PC-3 (cell line): ENCODE measurements at regions of chr6 and their contacts with region 1.

Region 1: GRCh38 chr6:109073344-109074132 is 21.1 kb downstream of the SESN1 start:
- DNase-seq: peak; percentile 74
- ATAC-seq: no peak; the same call in 1 of the 2 replicates
- H3K4me3 ChIP-seq: no peak overlapping the region
- H3K27ac ChIP-seq: no peak overlapping the region
- H3K4me1 ChIP-seq: 0 out of 2 replicates have a peak, but pooled peaks cover 4% of the 10 kb centered on the region
- H3K27me3 ChIP-seq: no peaks in the 10 kb centered on the region
- CTCF ChIP-seq: peak; percentile 72

Region 2: GRCh38 chr6:108541838-108542759 is 531.4 kb before region 1 on chr6:
- CTCF ChIA-PET with region 1: interaction called, 3 read pairs
- POLR2A ChIA-PET with region 1: no interaction called
- intact Hi-C with region 1: loop called (anchors 2 kb)
- DNase-seq: peak; percentile 76
- ATAC-seq: peak; percentile 71
- H3K4me3 ChIP-seq: peak overlapping the region; percentile 40; the same call in 1 of the 2 replicates
- H3K27ac ChIP-seq: no peak overlapping the region
- H3K4me1 ChIP-seq: 0 out of 2 replicates have a peak, but pooled peaks cover 4% of the 10 kb centered on the region
- H3K27me3 ChIP-seq: no peaks in the 10 kb centered on the region
- CTCF ChIP-seq: peak; percentile 85

Region 3: DNA sequence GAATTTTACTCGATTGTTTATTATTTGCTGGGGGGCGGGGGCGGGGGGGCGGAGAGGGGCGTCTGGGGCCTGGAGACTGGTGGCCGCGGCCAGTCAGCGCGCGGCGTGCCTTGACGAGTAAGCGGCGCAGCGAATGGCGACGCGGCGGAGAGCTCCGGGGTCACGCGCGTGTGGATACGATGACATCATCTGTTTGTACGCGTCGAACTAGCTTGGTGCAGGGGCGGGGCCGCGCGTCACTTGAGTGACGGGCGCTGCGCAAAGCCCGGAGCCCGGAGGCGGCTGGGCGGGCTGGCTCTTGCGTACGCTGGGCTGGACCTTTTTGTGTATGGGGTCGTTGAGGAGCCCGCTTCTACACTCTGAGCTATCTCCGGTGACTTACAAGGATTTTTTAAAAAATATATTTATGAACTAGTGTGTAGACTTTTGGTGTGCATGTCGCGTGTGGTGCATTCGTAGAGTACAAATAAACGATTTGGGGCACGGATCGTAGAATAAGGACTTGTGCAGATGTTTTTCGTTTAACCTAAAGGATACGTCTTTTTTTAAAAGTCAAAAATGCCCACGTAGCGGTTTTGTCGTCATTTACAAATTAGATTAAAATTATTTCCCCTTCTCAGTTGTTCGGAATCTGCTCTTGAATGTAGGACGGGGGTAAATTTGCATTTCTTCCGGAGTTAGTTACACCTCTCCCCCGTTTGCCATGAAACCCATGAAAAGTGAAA is 515.0 kb before region 1 on chr6:
- CTCF ChIA-PET with region 1: no interaction called
- POLR2A ChIA-PET with region 1: interaction called, 10 read pairs
- intact Hi-C with region 1: loop called (anchors 5 kb)
- DNase-seq: peak; percentile 96
- ATAC-seq: peak; percentile 41
- H3K4me3 ChIP-seq: peak overlapping the region; percentile 95
- H3K27ac ChIP-seq: peak overlapping the region; percentile 44; the same call in 1 of the 2 replicates
- H3K4me1 ChIP-seq: peaks cover 10% of the 10 kb centered on the region
- H3K27me3 ChIP-seq: no peaks in the 10 kb centered on the region
- CTCF ChIP-seq: no peak

Region 4: GRCh38 chr6:108737594-108738546 is 335.7 kb before region 1 on chr6:
- CTCF ChIA-PET with region 1: interaction called, 10 read pairs
- POLR2A ChIA-PET with region 1: no interaction called
- intact Hi-C with region 1: no loop called
- DNase-seq: peak; percentile 90
- ATAC-seq: peak; percentile 31
- H3K4me3 ChIP-seq: no peak overlapping the region; the same call in 1 of the 2 replicates
- H3K27ac ChIP-seq: peak overlapping the region; percentile 86
- H3K4me1 ChIP-seq: peaks cover 79% of the 10 kb centered on the region
- H3K27me3 ChIP-seq: no peaks in the 10 kb centered on the region
- CTCF ChIP-seq: no peak

Region 5: DNA sequence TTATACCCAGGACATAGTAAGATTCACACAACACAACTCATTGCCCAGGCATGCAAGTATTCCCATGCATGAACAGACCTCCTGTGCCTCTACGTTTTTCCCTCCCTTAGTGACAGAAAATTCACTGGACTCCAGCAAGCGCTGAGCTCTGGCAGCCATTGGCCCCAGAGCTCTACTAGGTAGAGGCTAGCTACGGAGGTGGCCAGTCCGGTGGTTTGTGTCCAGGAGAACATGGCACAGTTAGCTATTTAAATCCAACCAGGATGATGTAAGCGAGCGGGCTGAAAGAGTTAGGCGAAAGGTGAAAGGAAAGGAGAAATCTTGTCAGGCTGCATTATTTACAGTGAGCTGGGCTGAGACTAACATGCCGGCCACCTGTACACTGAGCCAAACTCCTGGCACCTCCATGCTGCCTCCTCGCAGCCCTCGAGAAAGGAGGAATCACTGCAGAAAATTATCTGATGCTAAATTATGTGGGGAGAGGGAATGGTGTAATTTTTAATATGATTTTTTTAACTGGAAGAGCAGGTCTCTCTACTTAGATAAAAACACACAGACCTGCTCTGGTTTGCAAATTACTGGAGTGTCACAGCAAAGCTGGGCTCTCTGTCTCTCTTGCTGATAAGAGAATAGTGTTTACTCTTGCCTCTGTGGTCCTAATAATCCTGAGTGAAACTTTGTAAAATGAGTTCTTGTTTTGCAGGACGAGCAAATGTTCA is 275.4 kb before region 1 on chr6:
- CTCF ChIA-PET with region 1: no interaction called
- POLR2A ChIA-PET with region 1: no interaction called
- intact Hi-C with region 1: no loop called
- DNase-seq: peak; percentile 8
- ATAC-seq: no peak
- H3K4me3 ChIP-seq: no peak overlapping the region
- H3K27ac ChIP-seq: no peak overlapping the region
- H3K4me1 ChIP-seq: peaks cover 12% of the 10 kb centered on the region
- H3K27me3 ChIP-seq: no peaks in the 10 kb centered on the region
- CTCF ChIP-seq: no peak

Region 6: DNA sequence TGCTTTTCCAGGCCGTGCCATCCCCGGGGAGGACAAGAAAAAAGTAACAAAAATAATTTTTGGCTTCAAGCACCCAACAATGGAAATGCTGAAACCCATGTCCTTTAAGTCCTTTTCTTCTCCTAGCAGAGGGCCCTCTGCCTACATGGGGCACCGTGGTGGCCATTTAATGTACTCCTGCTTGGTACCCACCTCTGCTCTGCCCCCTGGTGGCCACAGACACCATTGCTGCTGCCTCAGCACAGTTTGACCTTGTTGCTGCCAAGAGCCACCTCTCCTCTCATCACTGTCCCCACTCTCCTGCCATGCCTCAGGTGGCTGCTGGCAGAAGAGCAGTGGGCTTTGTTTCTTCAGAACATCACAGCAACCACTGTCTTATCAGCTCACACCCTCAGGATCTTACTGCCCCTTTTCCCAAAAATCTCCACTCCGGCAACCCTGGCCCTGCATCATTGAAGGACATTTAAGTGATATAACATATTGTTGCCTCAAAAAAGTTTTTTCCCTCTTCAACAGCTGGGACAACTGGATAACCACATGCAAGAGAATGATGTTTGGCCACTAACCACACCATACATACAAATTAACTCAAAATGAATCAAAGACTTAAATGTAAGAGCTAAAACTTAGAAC is 238.2 kb before region 1 on chr6:
- CTCF ChIA-PET with region 1: interaction called, 4 read pairs
- POLR2A ChIA-PET with region 1: no interaction called
- intact Hi-C with region 1: loop called (anchors 5 kb)
- DNase-seq: peak; percentile 78
- ATAC-seq: peak; percentile 95
- H3K4me3 ChIP-seq: no peak overlapping the region
- H3K27ac ChIP-seq: no peak overlapping the region
- H3K4me1 ChIP-seq: 0 out of 2 replicates have a peak, but pooled peaks cover 6% of the 10 kb centered on the region
- H3K27me3 ChIP-seq: no peaks in the 10 kb centered on the region
- CTCF ChIP-seq: peak; percentile 82

Region 7: GRCh38 chr6:108904741-108905140 is 168.8 kb before region 1 on chr6:
- CTCF ChIA-PET with region 1: no interaction called
- POLR2A ChIA-PET with region 1: interaction called, 4 read pairs
- intact Hi-C with region 1: loop called (anchors 2 kb)
- DNase-seq: no peak
- ATAC-seq: no peak
- H3K4me3 ChIP-seq: no peak overlapping the region
- H3K27ac ChIP-seq: no peak overlapping the region
- H3K4me1 ChIP-seq: peaks cover 9% of the 10 kb centered on the region
- H3K27me3 ChIP-seq: no peaks in the 10 kb centered on the region
- CTCF ChIP-seq: no peak

Region 8: DNA sequence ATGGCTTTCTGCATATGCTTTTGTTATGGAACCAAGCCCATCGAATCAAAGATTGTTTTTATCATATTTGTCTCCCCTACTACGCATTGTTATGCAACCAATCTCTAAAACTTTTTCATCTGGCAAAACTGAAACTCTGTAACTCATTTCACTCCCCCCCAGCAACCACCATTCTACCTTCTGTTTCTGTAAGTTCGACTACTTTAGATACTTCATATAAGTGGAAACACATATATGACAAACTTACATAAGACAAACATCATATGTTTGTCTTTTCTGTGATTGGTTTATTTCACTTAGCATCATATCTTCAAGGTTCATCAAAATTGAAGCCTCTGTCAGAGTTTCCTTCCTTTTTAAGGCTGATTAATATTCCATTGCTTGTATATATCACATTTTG is 56.5 kb after region 1 on chr6:
- CTCF ChIA-PET with region 1: no interaction called
- POLR2A ChIA-PET with region 1: no interaction called
- intact Hi-C with region 1: no loop called
- DNase-seq: no peak
- ATAC-seq: no peak
- H3K4me3 ChIP-seq: no peak overlapping the region
- H3K27ac ChIP-seq: no peak overlapping the region
- H3K4me1 ChIP-seq: no peaks in the 10 kb centered on the region
- H3K27me3 ChIP-seq: no peaks in the 10 kb centered on the region
- CTCF ChIP-seq: no peak

Region 9: GRCh38 chr6:109606359-109606758 is 532.8 kb after region 1 on chr6:
- CTCF ChIA-PET with region 1: no interaction called
- POLR2A ChIA-PET with region 1: no interaction called
- intact Hi-C with region 1: no loop called
- DNase-seq: no peak
- ATAC-seq: no peak
- H3K4me3 ChIP-seq: no peak overlapping the region
- H3K27ac ChIP-seq: no peak overlapping the region
- H3K4me1 ChIP-seq: no peaks in the 10 kb centered on the region
- H3K27me3 ChIP-seq: no peaks in the 10 kb centered on the region
- CTCF ChIP-seq: no peak